Activated naive CD4-positive, alpha-beta T cell treated with anti-CD3 and anti-CD28 coated beads for 36 hours (primary cell): ENCODE measurements at regions of chr11 and their contacts with region 1.

Region 1: GRCh38 chr11:17730608-17731462 is 3.7 kb upstream of the KCNC1 start:
- DNase-seq: peak; percentile 80
- H3K4me3 Mint-ChIP-seq: no peak overlapping the region
- H3K27ac Mint-ChIP-seq: no peak overlapping the region
- H3K4me1 Mint-ChIP-seq: peaks cover 5% of the 10 kb centered on the region
- H3K27me3 Mint-ChIP-seq: peaks cover 43% of the 10 kb centered on the region

Region 2: GRCh38 chr11:17598700-17599459 is 132.0 kb before region 1 on chr11:
- CTCF ChIA-PET with region 1: interaction called, 25 read pairs
- intact Hi-C with region 1: loop called (anchors 1 kb)
- DNase-seq: peak; percentile 83
- H3K4me3 Mint-ChIP-seq: no peak overlapping the region
- H3K27ac Mint-ChIP-seq: no peak overlapping the region
- H3K4me1 Mint-ChIP-seq: peaks cover 3% of the 10 kb centered on the region
- H3K27me3 Mint-ChIP-seq: no peaks in the 10 kb centered on the region

Region 3: DNA sequence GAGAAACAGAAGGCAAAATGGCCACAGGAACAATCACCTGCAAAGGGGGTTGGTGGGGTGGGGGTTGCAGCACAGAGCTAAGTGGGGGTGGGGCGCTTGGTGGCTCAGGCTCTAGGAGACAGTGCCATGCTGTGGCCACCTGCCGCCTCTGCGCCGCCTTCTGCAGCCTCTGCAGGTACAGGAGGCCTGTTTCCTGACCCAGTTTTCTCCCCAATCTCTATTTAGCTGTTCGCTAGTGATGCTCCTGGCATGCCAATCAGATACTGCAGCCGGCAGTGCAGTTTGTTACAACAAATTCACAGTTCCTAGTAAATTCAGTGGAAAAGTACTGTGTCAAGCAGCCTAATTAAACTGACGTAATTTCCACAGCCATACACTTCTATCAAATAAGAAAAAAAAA is 175.6 kb after region 1 on chr11:
- CTCF ChIA-PET with region 1: interaction called, 4 read pairs
- intact Hi-C with region 1: loop called (anchors 1 kb)
- DNase-seq: peak; percentile 12
- H3K4me3 Mint-ChIP-seq: no peak overlapping the region
- H3K27ac Mint-ChIP-seq: no peak overlapping the region
- H3K4me1 Mint-ChIP-seq: no peaks in the 10 kb centered on the region
- H3K27me3 Mint-ChIP-seq: no peaks in the 10 kb centered on the region

Region 4: GRCh38 chr11:17978553-17979287 is 247.9 kb after region 1 on chr11:
- CTCF ChIA-PET with region 1: interaction called, 100 read pairs
- intact Hi-C with region 1: loop called (anchors 1 kb)
- DNase-seq: peak; percentile 36
- H3K4me3 Mint-ChIP-seq: no peak overlapping the region
- H3K27ac Mint-ChIP-seq: no peak overlapping the region
- H3K4me1 Mint-ChIP-seq: no peaks in the 10 kb centered on the region
- H3K27me3 Mint-ChIP-seq: no peaks in the 10 kb centered on the region